ENCODE measurements at regions of chr21 and their contacts with region 1.

Region 1: GRCh38 chr21:42145569-42146272 is 73.2 kb upstream of the ABCG1 start:
- DNase-seq: peak; percentile 84

Region 2: DNA sequence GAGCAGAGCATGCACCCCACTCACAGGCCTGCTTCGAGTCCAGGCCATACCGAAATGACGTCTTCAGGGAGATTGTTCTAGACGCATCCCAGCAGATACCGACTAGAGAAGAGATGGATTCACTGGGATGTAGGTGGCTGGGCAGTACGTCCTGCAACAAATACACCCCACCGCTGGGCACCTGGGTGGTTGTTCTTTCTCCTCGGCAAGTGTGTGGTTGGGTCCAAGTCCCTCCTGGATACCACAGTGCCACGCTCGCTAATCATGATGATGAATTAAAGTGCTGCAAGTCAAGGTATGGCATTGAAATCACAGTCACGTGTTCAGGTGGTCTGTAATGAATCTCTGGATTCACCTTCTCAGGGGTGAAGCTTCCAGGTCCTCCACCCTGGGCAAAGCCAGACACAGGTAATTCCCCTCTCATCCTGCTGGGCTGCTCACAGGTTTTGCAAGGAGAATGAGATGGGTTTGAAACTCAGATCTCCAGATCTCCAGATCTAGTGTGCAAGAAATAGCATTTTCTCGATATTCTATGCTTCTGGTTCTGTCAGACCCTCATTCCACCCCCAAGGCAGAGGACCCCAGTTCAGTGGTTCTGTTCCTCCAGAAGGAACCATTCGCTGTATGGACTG is 303.7 kb after region 1 on chr21:
- intact Hi-C with region 1: loop called (anchors 5 kb)
- DNase-seq: no peak

Region 3: GRCh38 chr21:42496122-42496900 is 350.6 kb after region 1 on chr21 and contains the start of gene RSPH1:
- intact Hi-C with region 1: loop called (anchors 10 kb)
- DNase-seq: peak; percentile 100
- total RNA-seq, gene RSPH1: not detected

Region 4: DNA sequence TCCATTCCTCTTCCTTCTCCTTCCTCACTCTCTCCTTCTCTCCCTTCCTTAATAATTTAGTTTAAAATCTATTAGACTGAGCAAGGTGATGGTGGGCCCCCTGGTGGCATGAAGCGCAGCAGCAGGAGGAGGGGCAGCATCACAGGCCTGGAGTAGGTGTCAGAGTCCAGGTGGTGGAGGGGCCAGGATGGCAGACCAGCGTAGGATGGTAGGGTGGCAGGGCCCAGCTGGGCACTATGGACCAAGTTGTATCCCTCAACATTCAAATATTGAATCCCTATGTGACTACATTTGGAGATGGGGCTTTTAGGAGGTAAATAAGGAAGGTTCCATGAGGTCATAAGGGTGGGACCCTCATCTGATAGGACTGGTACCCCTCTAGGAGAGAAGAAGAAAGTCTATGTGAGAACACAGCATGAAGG is 672.6 kb after region 1 on chr21:
- intact Hi-C with region 1: loop called (anchors 10 kb)
- DNase-seq: peak; percentile 86